ENCODE measurements at regions of chr7 and their contacts with region 1.

Region 1: GRCh38 chr7:141014524-141015395 is at the start of gene MRPS33:
- DNase-seq: peak; percentile 93
- H3K4me3 Mint-ChIP-seq: peak within 1 kb of the TSS; percentile 92
- H3K27ac Mint-ChIP-seq: peak within 1 kb of the TSS; percentile 89
- H3K4me1 Mint-ChIP-seq: peaks cover 9% of the 10 kb centered on the region
- H3K27me3 Mint-ChIP-seq: no peaks in the 10 kb centered on the region
- CTCF ChIP-seq: no peak
- total RNA-seq, gene MRPS33: 54.6 and 60.3 TPM in 2 replicates

Region 2: DNA sequence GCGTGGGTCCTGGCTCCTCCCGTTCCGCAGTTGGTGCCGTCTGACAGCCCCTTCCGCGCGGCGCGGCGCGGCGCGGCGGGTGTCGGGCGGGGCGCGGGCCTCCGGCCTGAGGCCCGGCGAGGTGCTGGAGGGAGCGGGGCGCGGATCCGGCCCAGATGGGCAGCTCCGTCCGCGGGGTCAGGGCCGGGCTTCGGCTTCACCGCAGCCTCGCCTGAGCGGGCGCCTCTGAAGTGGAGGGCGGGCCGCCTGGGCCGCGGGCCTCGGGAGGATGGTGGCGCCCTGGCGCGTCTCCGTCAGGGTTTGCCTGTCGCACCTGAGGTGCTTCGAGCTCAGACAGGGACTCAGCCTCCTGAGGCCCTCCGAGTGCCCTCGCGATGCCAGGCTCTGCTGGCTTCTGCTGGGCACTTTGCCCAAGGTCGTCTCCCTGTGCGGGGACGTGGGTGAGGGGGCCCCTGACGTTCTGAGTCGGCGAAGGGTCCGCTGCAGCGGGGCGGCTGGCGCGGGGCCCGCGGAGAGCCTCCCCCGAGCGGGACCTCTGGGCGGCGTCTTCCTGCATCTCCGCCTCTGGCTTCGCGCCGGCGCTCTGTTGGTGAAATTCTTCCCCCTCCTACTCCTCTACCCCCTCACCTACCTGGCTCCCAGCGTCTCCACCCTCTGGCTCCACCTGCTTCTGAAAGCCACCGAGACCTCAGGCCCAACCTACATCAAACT is 341.5 kb before region 1 on chr7:
- CTCF ChIA-PET with region 1: no interaction called
- intact Hi-C with region 1: loop called (anchors 5 kb)
- DNase-seq: peak; percentile 62
- H3K4me3 Mint-ChIP-seq: peak overlapping the region; percentile 78
- H3K27ac Mint-ChIP-seq: peak overlapping the region; percentile 21
- H3K4me1 Mint-ChIP-seq: peaks cover 11% of the 10 kb centered on the region
- H3K27me3 Mint-ChIP-seq: no peaks in the 10 kb centered on the region
- CTCF ChIP-seq: no peak

Region 3: GRCh38 chr7:141142058-141142457 is 127.3 kb after region 1 on chr7:
- CTCF ChIA-PET with region 1: no interaction called
- intact Hi-C with region 1: no loop called
- DNase-seq: no peak
- H3K4me3 Mint-ChIP-seq: no peak overlapping the region
- H3K27ac Mint-ChIP-seq: no peak overlapping the region
- H3K4me1 Mint-ChIP-seq: no peaks in the 10 kb centered on the region
- H3K27me3 Mint-ChIP-seq: no peaks in the 10 kb centered on the region
- CTCF ChIP-seq: no peak

Region 4: GRCh38 chr7:141220263-141220880 is 205.6 kb after region 1 on chr7:
- CTCF ChIA-PET with region 1: interaction called, 3 read pairs
- intact Hi-C with region 1: loop called (anchors 5 kb)
- DNase-seq: peak; percentile 6
- H3K4me3 Mint-ChIP-seq: no peak overlapping the region
- H3K27ac Mint-ChIP-seq: no peak overlapping the region
- H3K4me1 Mint-ChIP-seq: no peaks in the 10 kb centered on the region
- H3K27me3 Mint-ChIP-seq: no peaks in the 10 kb centered on the region
- CTCF ChIP-seq: no peak

Region 5: GRCh38 chr7:141533149-141533949 is 518.6 kb after region 1 on chr7:
- CTCF ChIA-PET with region 1: interaction called, 4 read pairs
- intact Hi-C with region 1: loop called (anchors 2 kb)
- DNase-seq: peak; percentile 62
- H3K4me3 Mint-ChIP-seq: no peak overlapping the region
- H3K27ac Mint-ChIP-seq: no peak overlapping the region
- H3K4me1 Mint-ChIP-seq: no peaks in the 10 kb centered on the region
- H3K27me3 Mint-ChIP-seq: peaks cover 25% of the 10 kb centered on the region
- CTCF ChIP-seq: peak; percentile 85